Posterior vena cava (tissue), 2 donors: ENCODE measurements at regions of chr2 and their contacts with region 1.

Region 1: GRCh38 chr2:177534972-177535371 is 142.4 kb downstream of the AGPS start:
- DNase-seq: no peak

Region 2: DNA sequence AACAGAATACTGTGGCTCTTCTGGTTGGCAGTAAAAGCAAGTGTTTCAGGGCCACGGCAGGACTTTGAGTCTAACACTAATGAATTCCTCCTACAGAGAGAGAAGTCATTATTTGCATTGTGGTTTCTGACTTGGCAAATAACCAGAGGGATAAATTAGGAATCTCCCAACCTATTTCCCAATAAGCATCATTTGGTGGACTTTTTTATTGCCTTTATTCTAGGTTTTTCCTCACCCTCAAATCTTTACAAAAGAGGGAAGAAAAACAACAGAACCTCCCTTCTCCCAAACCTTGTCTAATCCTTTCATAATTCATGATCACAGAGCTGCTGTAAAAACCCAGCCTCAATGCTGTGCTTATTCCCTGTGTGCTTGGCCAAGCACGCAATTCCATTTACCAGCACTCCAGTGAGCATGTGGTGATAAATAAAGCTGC is 37.3 kb after region 1 on chr2:
- intact Hi-C with region 1: loop called in 1 of 2 experiments (anchors 1 kb)
- DNase-seq: no peak